CD4-positive, alpha-beta T cell (primary cell): ENCODE measurements at regions of chr17 and their contacts with region 1.

Region 1: GRCh38 chr17:49567871-49568694 is 7.6 kb upstream of the NXPH3 start:
- DNase-seq: peak; percentile 64 to 88 (median 77)
- ATAC-seq: peak; percentile 48
- H3K4me3 ChIP-seq: peak overlapping the region; percentile 39
- H3K4me3 Mint-ChIP-seq: peak overlapping the region; percentile 70
- H3K27ac ChIP-seq: no peak overlapping the region
- H3K27ac Mint-ChIP-seq: no peak overlapping the region
- H3K4me1 ChIP-seq: peaks cover 25% of the 10 kb centered on the region
- H3K4me1 Mint-ChIP-seq: peaks cover 14% of the 10 kb centered on the region
- H3K27me3 ChIP-seq: peaks cover 2 to 4% of the 10 kb centered on the region in 2 experiments
- H3K27me3 Mint-ChIP-seq: peaks cover 12% of the 10 kb centered on the region
- CTCF ChIP-seq: peak; percentile 96

Region 2: DNA sequence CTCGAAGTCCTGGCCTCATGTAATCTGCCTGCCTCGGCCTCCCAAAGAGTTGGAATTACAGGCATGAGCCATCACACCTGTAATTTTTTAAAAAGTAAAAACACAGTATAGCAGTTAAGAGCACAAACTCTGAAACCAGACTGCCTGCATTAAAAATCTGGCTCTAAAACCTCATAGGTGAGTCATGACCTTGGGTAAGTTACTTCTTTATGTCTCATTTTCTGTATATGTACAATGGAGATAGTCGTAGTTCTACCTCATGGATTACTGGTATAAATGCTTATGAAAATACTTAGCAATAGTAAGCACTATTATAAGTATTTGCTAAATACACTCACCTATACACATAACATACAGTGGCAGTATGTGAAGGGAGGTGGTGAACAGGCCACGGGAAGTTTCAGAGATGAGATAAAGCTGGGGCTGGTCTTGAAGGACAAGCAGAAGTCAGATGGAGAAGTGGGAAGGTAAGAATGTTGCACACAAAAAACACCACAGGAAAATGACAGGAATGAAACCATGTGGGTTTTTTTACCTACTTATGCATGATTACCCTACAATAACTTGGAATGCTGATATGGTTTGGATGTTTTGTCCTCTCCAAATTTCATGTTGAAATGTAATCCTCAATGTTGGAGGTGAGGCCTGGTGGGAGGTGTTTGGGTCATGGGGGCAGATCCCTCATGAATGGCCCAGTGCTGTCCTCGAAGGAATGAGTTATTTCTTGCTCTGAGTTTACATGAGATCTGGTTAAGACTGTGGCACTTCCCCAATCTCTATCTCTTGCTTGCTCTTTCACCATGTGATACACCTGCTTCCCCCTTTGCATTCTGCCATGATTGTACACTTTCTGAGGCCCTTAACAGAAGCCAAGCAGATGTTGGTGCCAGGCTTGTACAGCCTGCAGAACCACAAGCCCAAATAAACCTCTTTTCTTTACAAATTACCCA is 240.0 kb before region 1 on chr17:
- CTCF ChIA-PET with region 1: no interaction called
- POLR2A ChIA-PET with region 1: no interaction called
- intact Hi-C with region 1: no loop called
- DNase-seq: no peak
- ATAC-seq: no peak
- H3K4me3 ChIP-seq: no peak overlapping the region
- H3K4me3 Mint-ChIP-seq: no peak overlapping the region
- H3K27ac ChIP-seq: no peak overlapping the region
- H3K27ac Mint-ChIP-seq: peak overlapping the region; percentile 48
- H3K4me1 ChIP-seq: peaks cover 21% of the 10 kb centered on the region
- H3K4me1 Mint-ChIP-seq: peaks cover 60% of the 10 kb centered on the region
- H3K27me3 ChIP-seq: no peaks in the 10 kb centered on the region
- H3K27me3 Mint-ChIP-seq: no peaks in the 10 kb centered on the region
- CTCF ChIP-seq: no peak

Region 3: DNA sequence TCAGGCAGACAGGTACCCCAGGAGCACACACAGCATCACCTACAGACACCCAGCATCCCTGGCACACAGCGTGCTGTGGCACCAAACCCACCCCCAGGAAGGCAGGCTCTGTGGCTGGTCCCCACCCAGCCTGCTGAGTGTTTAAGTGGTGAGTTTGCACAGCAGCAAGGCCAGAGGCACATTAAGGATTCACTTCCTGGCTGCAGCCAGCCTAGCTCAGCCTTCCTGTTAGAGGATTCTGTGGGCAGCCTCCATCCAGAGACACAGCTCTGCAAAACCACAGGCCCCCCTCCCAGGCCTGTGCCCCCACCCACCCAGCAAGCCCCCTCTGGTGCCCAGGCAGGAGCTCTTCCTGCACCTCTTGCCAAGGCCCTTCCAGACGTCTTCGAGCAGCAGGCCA is 117.3 kb before region 1 on chr17:
- CTCF ChIA-PET with region 1: no interaction called
- POLR2A ChIA-PET with region 1: no interaction called
- intact Hi-C with region 1: no loop called
- DNase-seq: no peak
- ATAC-seq: no peak
- H3K4me3 ChIP-seq: no peak overlapping the region
- H3K4me3 Mint-ChIP-seq: no peak overlapping the region
- H3K27ac ChIP-seq: no peak overlapping the region
- H3K27ac Mint-ChIP-seq: no peak overlapping the region
- H3K4me1 ChIP-seq: peaks cover 11% of the 10 kb centered on the region
- H3K4me1 Mint-ChIP-seq: no peaks in the 10 kb centered on the region
- H3K27me3 ChIP-seq: peaks cover under 1 to 2% of the 10 kb centered on the region in 2 experiments
- H3K27me3 Mint-ChIP-seq: peaks cover 13% of the 10 kb centered on the region
- CTCF ChIP-seq: no peak

Region 4: DNA sequence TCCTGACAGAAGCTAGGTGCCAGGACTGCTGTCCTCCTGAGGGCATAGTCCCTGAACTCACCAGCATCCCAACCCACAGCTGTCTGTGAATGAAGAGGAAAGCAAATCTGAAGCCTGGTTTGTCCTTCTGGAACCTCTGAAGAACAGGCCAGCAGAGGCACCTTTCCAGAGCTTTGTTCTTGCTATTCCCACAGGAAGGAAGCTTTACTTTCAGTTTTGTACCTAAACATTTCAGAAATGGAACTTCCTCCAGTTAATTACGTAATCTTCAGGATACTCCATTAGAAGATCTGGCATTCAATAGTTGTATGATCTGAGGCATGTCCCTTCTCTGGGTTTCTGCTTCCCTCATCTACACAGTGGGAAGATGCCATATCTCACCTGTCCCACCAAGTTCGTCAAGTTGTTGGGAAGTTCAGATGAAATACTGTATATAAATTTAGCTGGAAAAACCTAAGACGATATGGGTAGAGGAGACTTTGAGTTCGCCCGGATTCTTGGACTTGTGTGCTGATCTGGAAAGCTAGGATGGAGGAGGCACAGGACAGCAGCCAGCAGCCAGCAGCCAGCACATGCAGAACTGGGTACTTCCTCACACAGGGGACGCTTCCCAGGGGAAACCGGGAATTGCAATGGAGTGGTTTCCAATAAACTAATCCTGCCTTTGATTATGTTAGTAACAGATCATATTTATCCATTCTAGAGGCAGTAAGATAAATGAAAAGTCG is 30.0 kb after region 1 on chr17:
- CTCF ChIA-PET with region 1: interaction called, 14 read pairs
- POLR2A ChIA-PET with region 1: no interaction called
- intact Hi-C with region 1: no loop called
- DNase-seq: no peak
- ATAC-seq: no peak
- H3K4me3 ChIP-seq: no peak overlapping the region
- H3K4me3 Mint-ChIP-seq: no peak overlapping the region
- H3K27ac ChIP-seq: no peak overlapping the region
- H3K27ac Mint-ChIP-seq: no peak overlapping the region
- H3K4me1 ChIP-seq: no peaks in the 10 kb centered on the region
- H3K4me1 Mint-ChIP-seq: no peaks in the 10 kb centered on the region
- H3K27me3 ChIP-seq: no peaks in the 10 kb centered on the region
- H3K27me3 Mint-ChIP-seq: no peaks in the 10 kb centered on the region
- CTCF ChIP-seq: no peak

Region 5: DNA sequence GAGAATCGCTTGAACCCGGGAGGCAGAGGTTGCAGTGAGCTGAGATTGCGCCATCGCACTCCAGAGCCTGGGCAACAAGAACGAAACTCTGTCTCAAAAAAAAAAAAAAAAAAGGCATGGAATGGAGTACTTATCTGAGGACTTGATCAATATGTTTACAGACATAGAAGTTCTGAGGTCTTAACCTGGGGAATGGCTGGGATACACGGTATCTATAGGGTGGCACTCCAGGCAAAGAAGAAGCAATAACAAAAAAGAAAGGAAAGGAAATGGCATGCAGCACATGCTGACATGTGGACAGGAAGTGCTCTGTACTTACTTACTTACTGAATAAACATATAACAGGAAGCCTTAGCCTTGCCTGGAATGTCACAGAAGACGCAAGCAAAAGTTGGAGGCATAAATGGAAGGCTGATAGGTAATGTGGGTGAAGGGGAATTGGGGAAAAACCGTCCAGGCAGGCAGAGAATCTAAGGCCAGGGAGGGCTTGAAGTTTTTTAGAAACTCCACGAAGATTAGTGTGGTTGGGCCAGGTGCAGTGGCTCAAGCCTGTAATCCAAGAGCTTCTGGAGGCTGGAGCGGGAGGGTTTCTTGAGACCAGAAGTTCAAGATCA is 119.9 kb after region 1 on chr17:
- CTCF ChIA-PET with region 1: interaction called, 12 read pairs
- POLR2A ChIA-PET with region 1: no interaction called
- intact Hi-C with region 1: no loop called
- DNase-seq: peak in 5 of 14 experiments; percentile 8 to 74 (median 54)
- ATAC-seq: peak; percentile 94
- H3K4me3 ChIP-seq: peak overlapping the region; percentile 30
- H3K4me3 Mint-ChIP-seq: peak overlapping the region; percentile 85
- H3K27ac ChIP-seq: peak overlapping the region; percentile 55 to 61
- H3K27ac Mint-ChIP-seq: peak overlapping the region; percentile 89
- H3K4me1 ChIP-seq: peaks cover 49% of the 10 kb centered on the region
- H3K4me1 Mint-ChIP-seq: peaks cover 43% of the 10 kb centered on the region
- H3K27me3 ChIP-seq: no peaks in the 10 kb centered on the region
- H3K27me3 Mint-ChIP-seq: no peaks in the 10 kb centered on the region
- CTCF ChIP-seq: no peak

Region 6: GRCh38 chr17:49707608-49708514 is 139.8 kb after region 1 on chr17 and contains the start of gene SLC35B1:
- CTCF ChIA-PET with region 1: interaction called, 33 read pairs
- POLR2A ChIA-PET with region 1: interaction called, 18 read pairs
- intact Hi-C with region 1: no loop called
- DNase-seq: peak; percentile 96 to 99 (median 98)
- ATAC-seq: peak; percentile 97
- H3K4me3 ChIP-seq: peak within 1 kb of the TSS; percentile 81
- H3K4me3 Mint-ChIP-seq: peak within 1 kb of the TSS; percentile 99
- H3K27ac ChIP-seq: peak within 1 kb of the TSS; percentile 83 to 94
- H3K27ac Mint-ChIP-seq: peak within 1 kb of the TSS; percentile 87
- H3K4me1 ChIP-seq: peaks cover 34% of the 10 kb centered on the region
- H3K4me1 Mint-ChIP-seq: peaks cover 49% of the 10 kb centered on the region
- H3K27me3 ChIP-seq: no peaks in the 10 kb centered on the region
- H3K27me3 Mint-ChIP-seq: no peaks in the 10 kb centered on the region
- CTCF ChIP-seq: peak; percentile 82
- total RNA-seq, gene SLC35B1: 44.0 to 46.8 TPM

Region 7: GRCh38 chr17:49788478-49789242 is 220.6 kb after region 1 on chr17 and contains the start of gene KAT7:
- CTCF ChIA-PET with region 1: interaction called, 7 read pairs
- POLR2A ChIA-PET with region 1: interaction called, 7 read pairs
- intact Hi-C with region 1: loop called in 1 of 2 experiments (anchors 1 kb)
- DNase-seq: peak; percentile 95 to 100 (median 97)
- ATAC-seq: peak; percentile 80
- H3K4me3 ChIP-seq: peak within 1 kb of the TSS; percentile 93
- H3K4me3 Mint-ChIP-seq: peak within 1 kb of the TSS; percentile 100
- H3K27ac ChIP-seq: peak within 1 kb of the TSS; percentile 98 to 99
- H3K27ac Mint-ChIP-seq: peak within 1 kb of the TSS; percentile 96
- H3K4me1 ChIP-seq: peaks cover 34% of the 10 kb centered on the region
- H3K4me1 Mint-ChIP-seq: peaks cover 60% of the 10 kb centered on the region
- H3K27me3 ChIP-seq: no peaks in the 10 kb centered on the region
- H3K27me3 Mint-ChIP-seq: no peaks in the 10 kb centered on the region
- CTCF ChIP-seq: no peak
- total RNA-seq, gene KAT7: 178 to 187 TPM

Region 8: DNA sequence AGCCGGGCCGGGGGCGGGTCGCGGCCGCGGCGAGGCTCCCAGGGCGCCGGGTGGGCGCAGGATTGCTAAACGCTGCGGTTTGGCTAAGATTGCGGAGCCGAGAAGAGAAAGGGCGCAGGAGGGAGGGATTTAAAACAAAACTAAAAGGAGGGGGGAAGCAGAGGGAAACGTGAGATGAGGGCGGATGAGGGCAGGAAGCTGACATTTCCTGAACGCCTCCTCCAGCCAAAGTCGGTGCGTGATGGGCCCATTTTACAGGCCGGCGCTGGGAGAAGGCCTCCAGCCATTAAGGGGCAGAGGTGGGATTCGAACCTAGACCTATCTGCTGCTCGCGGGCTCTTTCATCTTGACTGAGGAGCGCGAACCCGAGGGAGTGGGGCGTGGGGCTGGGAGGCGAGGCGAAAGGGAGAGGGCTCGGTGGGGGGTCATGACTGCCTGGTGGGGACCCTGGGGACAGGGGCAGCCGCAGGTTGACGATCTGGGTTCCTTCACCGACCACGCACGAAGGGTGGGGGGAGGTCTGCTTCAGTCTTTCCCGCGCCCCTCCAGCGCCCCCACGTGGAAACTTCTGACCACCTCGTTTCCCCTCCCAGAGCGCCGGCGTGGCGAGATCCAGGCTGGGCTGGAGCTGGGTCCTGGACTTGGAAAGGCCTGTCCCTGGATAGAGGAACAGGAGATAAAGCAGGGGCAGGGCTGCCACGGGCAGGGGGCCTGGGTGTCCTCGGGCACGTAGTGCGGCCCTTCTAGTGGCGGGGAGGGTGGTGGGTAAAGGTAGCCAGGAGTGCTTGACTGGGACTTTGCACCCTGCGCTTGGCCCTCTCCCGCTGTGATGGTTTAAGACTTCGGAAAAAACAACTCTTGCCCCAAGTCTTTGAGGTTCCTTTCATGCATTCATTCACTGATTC is 283.6 kb after region 1 on chr17:
- CTCF ChIA-PET with region 1: interaction called, 5 read pairs
- POLR2A ChIA-PET with region 1: interaction called, 5 read pairs
- intact Hi-C with region 1: loop called (anchors 1 to 2 kb)
- DNase-seq: peak; percentile 61 to 83 (median 69)
- ATAC-seq: peak; percentile 81
- H3K4me3 ChIP-seq: peak overlapping the region; percentile 82
- H3K4me3 Mint-ChIP-seq: peak overlapping the region; percentile 96
- H3K27ac ChIP-seq: peak overlapping the region; percentile 16 to 69
- H3K27ac Mint-ChIP-seq: peak overlapping the region; percentile 89
- H3K4me1 ChIP-seq: peaks cover 18% of the 10 kb centered on the region
- H3K4me1 Mint-ChIP-seq: peaks cover 22% of the 10 kb centered on the region
- H3K27me3 ChIP-seq: no peaks in the 10 kb centered on the region
- H3K27me3 Mint-ChIP-seq: no peaks in the 10 kb centered on the region
- CTCF ChIP-seq: peak; percentile 78

Region 9: GRCh38 chr17:49926886-49927285 is 358.8 kb after region 1 on chr17:
- CTCF ChIA-PET with region 1: no interaction called
- POLR2A ChIA-PET with region 1: no interaction called
- intact Hi-C with region 1: no loop called
- DNase-seq: no peak
- ATAC-seq: no peak
- H3K4me3 ChIP-seq: no peak overlapping the region
- H3K4me3 Mint-ChIP-seq: no peak overlapping the region
- H3K27ac ChIP-seq: no peak overlapping the region
- H3K27ac Mint-ChIP-seq: no peak overlapping the region
- H3K4me1 ChIP-seq: no peaks in the 10 kb centered on the region
- H3K4me1 Mint-ChIP-seq: no peaks in the 10 kb centered on the region
- H3K27me3 ChIP-seq: peaks cover 8 to 11% of the 10 kb centered on the region in 2 experiments
- H3K27me3 Mint-ChIP-seq: peaks cover 64% of the 10 kb centered on the region
- CTCF ChIP-seq: no peak

Region 10: DNA sequence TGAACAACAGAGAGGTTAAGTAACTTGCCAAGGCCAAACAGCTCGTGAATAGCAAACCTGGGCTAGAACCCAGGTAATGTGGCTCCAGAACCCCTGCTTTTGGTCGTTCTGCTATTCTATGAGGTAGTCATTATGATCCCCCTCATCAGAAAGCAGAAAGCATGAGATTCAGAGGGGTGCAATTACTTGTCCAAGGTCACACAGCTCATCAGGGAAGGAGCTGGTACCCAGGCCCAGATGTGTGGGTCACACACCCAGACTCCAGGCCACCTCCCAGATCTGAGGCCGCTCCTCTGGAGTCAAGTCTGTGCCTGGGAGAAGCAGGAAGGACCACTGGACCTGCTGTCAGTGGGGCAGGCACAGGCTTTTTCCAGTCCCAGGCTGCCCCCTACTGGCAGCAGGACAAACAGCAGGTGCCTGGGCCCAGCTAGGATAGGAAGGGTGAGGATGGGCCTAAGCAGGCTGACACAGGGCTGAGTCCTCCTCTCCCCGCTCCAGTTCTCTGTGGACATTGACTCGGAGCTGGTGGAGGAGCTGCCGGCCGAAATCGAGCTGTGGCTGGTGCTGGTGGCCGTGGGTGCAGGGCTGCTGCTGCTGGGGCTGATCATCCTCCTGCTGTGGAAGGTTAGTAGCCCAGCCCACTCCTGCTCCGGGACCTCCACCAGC is 519.3 kb after region 1 on chr17:
- CTCF ChIA-PET with region 1: no interaction called
- POLR2A ChIA-PET with region 1: no interaction called
- intact Hi-C with region 1: loop called in 1 of 2 experiments (anchors 10 kb)
- DNase-seq: peak; percentile 50 to 84 (median 71)
- ATAC-seq: peak; percentile 89
- H3K4me3 ChIP-seq: no peak overlapping the region
- H3K4me3 Mint-ChIP-seq: no peak overlapping the region
- H3K27ac ChIP-seq: no peak overlapping the region
- H3K27ac Mint-ChIP-seq: no peak overlapping the region
- H3K4me1 ChIP-seq: peaks cover 3% of the 10 kb centered on the region
- H3K4me1 Mint-ChIP-seq: no peaks in the 10 kb centered on the region
- H3K27me3 ChIP-seq: no peaks in the 10 kb centered on the region
- H3K27me3 Mint-ChIP-seq: no peaks in the 10 kb centered on the region
- CTCF ChIP-seq: peak; percentile 99